ENCODE measurements at regions of chr19 and their contacts with region 1.

Region 1: GRCh38 chr19:17305517-17306284 is at the start of gene MRPL34:
- DNase-seq: peak; percentile 99
- H3K4me3 ChIP-seq: peak within 1 kb of the TSS; percentile 70
- H3K27ac ChIP-seq: peak within 1 kb of the TSS; percentile 85
- H3K4me1 ChIP-seq: peaks cover 19% of the 10 kb centered on the region
- H3K27me3 ChIP-seq: no peaks in the 10 kb centered on the region
- CTCF ChIP-seq: peak; percentile 76
- total RNA-seq, gene MRPL34: 91.8 and 93.1 TPM in 2 replicates

Region 2: GRCh38 chr19:17266975-17267788 is 38.5 kb before region 1 on chr19 and contains the start of gene BABAM1:
- CTCF ChIA-PET with region 1: no interaction called
- POLR2A ChIA-PET with region 1: interaction called, 21 read pairs
- intact Hi-C with region 1: no loop called
- DNase-seq: peak; percentile 99
- H3K4me3 ChIP-seq: peak within 1 kb of the TSS; percentile 85
- H3K27ac ChIP-seq: peak within 1 kb of the TSS; percentile 77
- H3K4me1 ChIP-seq: peaks cover 6% of the 10 kb centered on the region
- H3K27me3 ChIP-seq: no peaks in the 10 kb centered on the region
- CTCF ChIP-seq: no peak
- total RNA-seq, gene BABAM1: 136 and 147 TPM in 2 replicates

Region 3: DNA sequence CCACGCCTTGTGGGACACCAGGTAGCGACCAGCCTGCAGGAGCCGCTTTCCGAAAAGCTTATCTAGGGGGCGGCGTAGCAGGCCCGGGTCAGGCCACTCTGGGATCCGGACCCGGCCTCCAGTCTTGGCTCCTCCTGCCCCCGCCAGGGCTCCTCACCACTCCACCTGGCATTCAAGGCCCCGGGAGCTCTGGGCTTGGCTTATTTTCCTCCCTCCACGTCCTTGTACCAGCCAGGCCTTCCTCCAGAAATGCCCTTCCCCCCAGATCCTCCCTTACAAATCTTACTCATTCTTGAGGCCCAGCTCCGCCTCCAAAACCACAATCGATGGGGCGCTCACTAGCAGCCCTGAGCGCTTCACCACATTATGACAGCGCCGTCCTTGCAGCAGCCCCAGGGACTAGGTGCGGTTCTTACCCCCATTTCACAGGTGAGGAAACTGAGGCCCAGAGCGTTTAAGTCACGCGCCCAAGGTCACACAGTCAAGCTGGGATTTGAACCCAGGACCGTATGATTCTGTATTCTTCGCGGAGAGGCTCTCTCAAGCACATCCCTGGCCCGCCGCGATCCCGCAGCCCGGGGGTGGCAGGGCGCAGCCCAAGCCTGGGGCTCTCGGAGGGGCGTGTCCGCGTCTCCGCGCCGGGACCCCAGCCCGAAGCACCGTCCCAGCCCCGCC is 28.2 kb after region 1 on chr19:
- CTCF ChIA-PET with region 1: no interaction called
- POLR2A ChIA-PET with region 1: interaction called, 24 read pairs
- intact Hi-C with region 1: no loop called
- DNase-seq: peak; percentile 76
- H3K4me3 ChIP-seq: peak overlapping the region; percentile 91
- H3K27ac ChIP-seq: peak overlapping the region; percentile 90
- H3K4me1 ChIP-seq: peaks cover 8% of the 10 kb centered on the region
- H3K27me3 ChIP-seq: no peaks in the 10 kb centered on the region
- CTCF ChIP-seq: no peak

Region 4: GRCh38 chr19:17582613-17583012 is 276.9 kb after region 1 on chr19:
- CTCF ChIA-PET with region 1: no interaction called
- POLR2A ChIA-PET with region 1: interaction called, 13 read pairs
- intact Hi-C with region 1: no loop called
- DNase-seq: no peak
- H3K4me3 ChIP-seq: no peak overlapping the region
- H3K27ac ChIP-seq: no peak overlapping the region
- H3K4me1 ChIP-seq: no peaks in the 10 kb centered on the region
- H3K27me3 ChIP-seq: no peaks in the 10 kb centered on the region
- CTCF ChIP-seq: 0 out of 2 replicates have a peak, but pooled peaks have one; percentile 14

Region 5: GRCh38 chr19:18021121-18021755 is 715.5 kb after region 1 on chr19:
- CTCF ChIA-PET with region 1: interaction called, 10 read pairs
- POLR2A ChIA-PET with region 1: no interaction called
- intact Hi-C with region 1: no loop called
- DNase-seq: peak; percentile 80
- H3K4me3 ChIP-seq: no peak overlapping the region
- H3K27ac ChIP-seq: peak overlapping the region; percentile 51
- H3K4me1 ChIP-seq: peaks cover 43% of the 10 kb centered on the region
- H3K27me3 ChIP-seq: no peaks in the 10 kb centered on the region
- CTCF ChIP-seq: no peak